T-cell (primary cell): ENCODE measurements at regions of chr5 and their contacts with region 1.

Region 1: DNA sequence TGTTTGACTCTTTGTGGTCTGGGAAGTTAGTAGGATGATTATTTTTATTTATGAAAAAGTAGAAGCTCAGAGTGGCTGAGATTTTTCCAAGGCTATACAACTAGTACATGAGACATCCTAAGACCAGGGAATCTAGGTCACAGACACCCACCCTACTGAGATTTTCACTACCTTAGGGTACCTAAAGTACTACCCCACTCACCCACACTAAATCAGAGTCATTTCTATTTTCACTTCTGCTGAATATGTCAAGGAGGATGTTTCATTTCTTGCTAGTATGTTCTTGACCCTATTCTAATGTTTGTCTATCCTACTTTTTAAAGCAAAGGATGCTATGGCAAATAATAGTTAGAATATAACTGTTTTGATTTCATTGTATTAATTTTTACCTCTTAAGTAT is 206.0 kb downstream of the ATP10B start:
- DNase-seq: no peak
- ATAC-seq: no peak
- H3K4me3 ChIP-seq: no peak overlapping the region
- H3K4me3 Mint-ChIP-seq: no peak overlapping the region
- H3K27ac ChIP-seq: no peak overlapping the region
- H3K27ac Mint-ChIP-seq: no peak overlapping the region
- H3K4me1 ChIP-seq: no peaks in the 10 kb centered on the region
- H3K4me1 Mint-ChIP-seq: no peaks in the 10 kb centered on the region
- H3K27me3 ChIP-seq: peaks cover 0 to 8% of the 10 kb centered on the region in 2 experiments
- H3K27me3 Mint-ChIP-seq: peaks cover 6 to 9% of the 10 kb centered on the region in 2 donors

Region 2: GRCh38 chr5:160665460-160665859 is 19.4 kb after region 1 on chr5:
- CTCF ChIA-PET with region 1: no interaction called
- POLR2A ChIA-PET with region 1: interaction called in 1 of 2 experiments, 10 read pairs
- DNase-seq: no peak
- ATAC-seq: no peak
- H3K4me3 ChIP-seq: no peak overlapping the region
- H3K4me3 Mint-ChIP-seq: no peak overlapping the region
- H3K27ac ChIP-seq: no peak overlapping the region
- H3K27ac Mint-ChIP-seq: no peak overlapping the region
- H3K4me1 ChIP-seq: no peaks in the 10 kb centered on the region
- H3K4me1 Mint-ChIP-seq: no peaks in the 10 kb centered on the region
- H3K27me3 ChIP-seq: no peaks in the 10 kb centered on the region
- H3K27me3 Mint-ChIP-seq: peaks cover 0 to 8% of the 10 kb centered on the region in 2 donors

Region 3: GRCh38 chr5:160675988-160676387 is 30.0 kb after region 1 on chr5:
- CTCF ChIA-PET with region 1: no interaction called
- POLR2A ChIA-PET with region 1: no interaction called
- DNase-seq: no peak
- ATAC-seq: no peak
- H3K4me3 ChIP-seq: no peak overlapping the region
- H3K4me3 Mint-ChIP-seq: no peak overlapping the region
- H3K27ac ChIP-seq: no peak overlapping the region
- H3K27ac Mint-ChIP-seq: no peak overlapping the region
- H3K4me1 ChIP-seq: no peaks in the 10 kb centered on the region
- H3K4me1 Mint-ChIP-seq: no peaks in the 10 kb centered on the region
- H3K27me3 ChIP-seq: no peaks in the 10 kb centered on the region
- H3K27me3 Mint-ChIP-seq: peaks cover 5 to 12% of the 10 kb centered on the region in 2 donors

Region 4: DNA sequence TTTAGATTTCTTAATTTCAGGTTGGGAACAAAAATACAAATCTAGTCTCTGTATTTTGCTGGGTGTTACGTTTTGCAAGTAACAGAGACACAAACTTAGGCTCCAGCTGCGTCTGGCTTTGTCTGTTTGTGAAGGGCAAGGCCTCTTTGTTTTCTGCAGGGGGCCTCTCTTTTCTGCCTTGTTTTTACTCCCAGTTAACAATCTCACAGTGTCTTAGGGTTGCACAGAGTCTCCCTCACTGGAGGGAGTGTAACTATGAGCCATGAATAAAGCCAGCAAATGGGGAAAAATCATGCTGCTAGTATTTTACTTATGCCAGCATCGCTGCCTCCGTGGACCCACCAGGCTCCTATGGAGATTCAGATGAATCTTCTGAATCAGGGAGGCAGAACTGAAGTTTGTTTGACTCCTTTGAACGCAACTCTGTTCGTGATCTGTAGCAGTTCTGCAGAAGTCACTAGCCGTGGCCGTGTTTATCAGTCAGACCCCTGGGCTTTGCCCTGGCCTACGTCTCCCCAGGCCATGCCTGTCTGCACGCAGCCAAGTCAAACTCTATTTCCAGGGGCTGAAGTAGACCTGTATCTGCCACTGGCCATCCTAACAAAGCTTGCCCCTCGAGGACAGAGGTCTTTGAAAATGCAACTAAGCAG is 128.8 kb after region 1 on chr5:
- CTCF ChIA-PET with region 1: no interaction called
- POLR2A ChIA-PET with region 1: no interaction called
- DNase-seq: no peak
- ATAC-seq: no peak
- H3K4me3 ChIP-seq: no peak overlapping the region
- H3K4me3 Mint-ChIP-seq: no peak overlapping the region
- H3K27ac ChIP-seq: no peak overlapping the region
- H3K27ac Mint-ChIP-seq: no peak overlapping the region
- H3K4me1 ChIP-seq: no peaks in the 10 kb centered on the region
- H3K4me1 Mint-ChIP-seq: no peaks in the 10 kb centered on the region
- H3K27me3 ChIP-seq: peaks cover 0 to 3% of the 10 kb centered on the region in 2 experiments
- H3K27me3 Mint-ChIP-seq: no peaks in the 10 kb centered on the region